ENCODE measurements at regions of chr17 and their contacts with region 1.

Region 1: GRCh38 chr17:60743799-60744198 is 66.1 kb downstream of the BCAS3 start:
- ATAC-seq: peak; percentile 29 to 84 (median 72)
- H3K4me3 ChIP-seq: no peak overlapping the region
- H3K27ac ChIP-seq: peak overlapping the region in 1 of 2 donors; percentile 64
- H3K4me1 ChIP-seq: peaks cover 4 to 14% of the 10 kb centered on the region in 2 donors

Region 2: DNA sequence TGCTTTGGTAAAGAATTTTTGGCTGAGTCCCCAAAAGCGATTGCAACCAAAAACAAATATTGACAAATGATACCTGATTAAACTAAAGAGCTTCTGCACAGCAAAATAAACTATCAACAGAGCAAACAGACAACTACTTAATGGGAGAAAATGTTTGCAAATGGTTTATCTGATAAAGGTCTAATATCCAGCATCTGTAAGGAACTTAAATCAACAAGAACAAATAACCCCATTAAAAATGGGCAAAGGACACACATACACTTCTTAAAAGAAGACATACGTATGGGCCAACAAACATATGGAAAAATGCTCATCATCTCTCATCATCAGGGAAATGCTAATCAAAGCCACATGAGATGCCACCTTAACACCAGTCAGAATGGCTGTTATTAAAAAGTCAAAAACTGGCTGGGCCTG is 176.4 kb after region 1 on chr17:
- in situ Hi-C with region 1: no loop called
- ATAC-seq: no peak
- H3K4me3 ChIP-seq: no peak overlapping the region
- H3K27ac ChIP-seq: no peak overlapping the region
- H3K4me1 ChIP-seq: no peaks in the 10 kb centered on the region

Region 3: DNA sequence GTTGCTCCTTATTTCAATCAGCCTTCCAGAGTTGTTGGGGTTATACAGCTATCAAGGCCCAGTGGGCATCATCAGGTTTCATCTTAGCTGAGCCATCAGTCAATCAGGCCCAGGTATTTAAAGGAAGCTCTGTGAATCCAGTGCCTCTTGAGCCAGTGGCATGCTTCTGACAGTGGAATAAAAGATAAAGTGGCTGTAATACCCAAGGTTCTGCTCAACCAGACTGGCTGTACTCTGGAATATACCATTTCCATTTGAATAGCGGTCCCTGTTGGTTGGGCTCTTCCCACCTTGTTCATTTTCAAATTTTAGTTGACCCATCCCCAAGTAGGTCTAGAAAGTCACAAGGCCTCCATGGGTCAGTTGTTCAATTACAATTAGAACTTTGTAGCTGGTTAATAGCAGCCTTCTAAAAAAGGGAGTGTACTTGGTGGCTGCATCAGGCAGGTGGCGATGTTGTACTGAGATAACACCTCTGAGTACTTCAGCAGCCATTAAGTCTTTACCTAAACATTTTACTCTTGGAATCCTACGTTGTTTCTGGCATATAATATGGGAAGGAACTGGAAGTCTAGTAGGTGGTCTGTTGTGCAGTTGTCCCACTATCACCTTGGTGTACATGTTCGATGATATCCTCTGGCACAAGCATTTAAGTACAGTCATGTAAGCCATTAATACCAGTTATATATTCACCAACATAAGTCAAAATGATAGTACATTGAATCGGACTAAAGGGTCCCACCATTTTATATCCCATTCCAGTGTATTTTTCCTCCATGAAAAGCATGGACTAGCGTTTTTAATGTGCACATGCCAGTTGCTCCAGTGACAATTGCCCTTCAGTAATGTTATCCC is 227.9 kb after region 1 on chr17:
- in situ Hi-C with region 1: loop called in 3 of 9 experiments (anchors 25 kb)
- ATAC-seq: peak in 4 of 8 experiments; percentile 53 to 78 (median 76)
- H3K4me3 ChIP-seq: no peak overlapping the region
- H3K27ac ChIP-seq: no peak overlapping the region
- H3K4me1 ChIP-seq: no peaks in the 10 kb centered on the region

Region 4: GRCh38 chr17:60989379-60989778 is 245.6 kb after region 1 on chr17:
- in situ Hi-C with region 1: loop called in 1 of 9 experiments (anchors 25 kb)
- ATAC-seq: peak in 1 of 8 experiments; percentile 54
- H3K4me3 ChIP-seq: no peak overlapping the region
- H3K27ac ChIP-seq: no peak overlapping the region
- H3K4me1 ChIP-seq: no peaks in the 10 kb centered on the region